Posterior cingulate gyrus (tissue), 11 donors: ENCODE measurements at regions of chr2 and their contacts with region 1.

Region 1: GRCh38 chr2:203583701-203584100 is 48.6 kb upstream of the RAPH1 start:
- DNase-seq: no peak

Region 2: GRCh38 chr2:203135105-203135504 is 448.6 kb before region 1 on chr2:
- intact Hi-C with region 1: no loop called
- DNase-seq: no peak

Region 3: GRCh38 chr2:203714106-203714505 is 130.4 kb after region 1 on chr2:
- intact Hi-C with region 1: loop called (anchors 5 kb)
- DNase-seq: no peak